ENCODE measurements at regions of chr10 and their contacts with region 1.

Region 1: DNA sequence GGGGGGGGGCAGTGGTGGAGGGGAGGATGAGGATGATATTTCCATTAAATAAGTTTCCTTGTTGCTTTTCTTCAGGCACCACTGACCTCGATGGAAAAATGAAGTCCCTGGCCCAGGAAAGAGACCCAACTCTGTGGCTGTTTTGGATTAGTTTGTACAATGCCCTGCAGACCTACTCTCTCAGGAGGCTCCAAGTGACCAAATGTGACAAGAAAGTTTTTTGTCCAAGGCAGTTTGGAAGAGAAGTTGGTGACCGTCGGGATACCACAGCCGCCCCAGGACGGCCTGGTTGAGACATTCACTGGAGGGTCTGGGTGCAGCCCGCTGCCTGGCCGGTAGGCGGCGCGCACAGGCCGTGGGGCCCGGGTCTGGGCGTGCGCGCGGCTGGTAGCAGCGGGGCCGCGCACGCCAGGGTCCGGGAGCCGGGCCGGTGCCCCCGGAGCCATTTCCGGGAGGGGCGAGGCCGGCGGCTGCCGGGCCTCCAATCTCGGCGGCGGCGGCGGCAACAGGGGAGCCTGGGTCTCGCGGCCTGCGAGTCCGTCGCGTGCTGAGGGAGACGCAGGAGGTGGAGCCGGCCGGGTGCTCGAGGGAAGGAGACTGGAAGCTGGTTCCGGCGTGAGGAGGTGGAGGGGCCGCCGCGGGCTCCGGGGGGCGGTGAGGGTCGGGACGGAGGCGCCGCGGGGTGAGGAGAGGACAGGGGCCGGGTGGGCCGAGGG is at the start of gene SGPL1:
- DNase-seq: peak; percentile 30
- H3K4me3 ChIP-seq: peak within 1 kb of the TSS; percentile 96
- H3K27ac ChIP-seq: peak within 1 kb of the TSS; percentile 95
- H3K27me3 ChIP-seq: peaks cover 8% of the 10 kb centered on the region
- CTCF ChIP-seq: peak; percentile 79
- polyA plus RNA-seq, gene SGPL1: 30.1 and 30.8 TPM in 2 replicates

Region 2: GRCh38 chr10:70832852-70833528 is 17.3 kb after region 1 on chr10:
- CTCF ChIA-PET with region 1: interaction called, 7 read pairs
- POLR2A ChIA-PET with region 1: interaction called, 11 read pairs
- DNase-seq: peak; percentile 55
- H3K4me3 ChIP-seq: peak overlapping the region; percentile 11; the same call in 1 of the 2 replicates
- H3K27ac ChIP-seq: peak overlapping the region; percentile 65
- H3K27me3 ChIP-seq: no peaks in the 10 kb centered on the region
- CTCF ChIP-seq: no peak

Region 3: GRCh38 chr10:70880077-70880534 is 64.4 kb after region 1 on chr10:
- CTCF ChIA-PET with region 1: interaction called, 11 read pairs
- POLR2A ChIA-PET with region 1: no interaction called
- DNase-seq: peak; percentile 38
- H3K4me3 ChIP-seq: no peak overlapping the region
- H3K27ac ChIP-seq: no peak overlapping the region
- H3K27me3 ChIP-seq: no peaks in the 10 kb centered on the region
- CTCF ChIP-seq: peak; percentile 96